ENCODE measurements at regions of chr17 and their contacts with region 1.

Region 1: GRCh38 chr17:28937044-28937729 is 14.1 kb downstream of the PHF12 start:
- DNase-seq: no peak

Region 2: GRCh38 chr17:28889996-28890395 is 47.2 kb before region 1 on chr17:
- intact Hi-C with region 1: loop called in 1 of 2 experiments (anchors 10 kb)
- DNase-seq: no peak

Region 3: GRCh38 chr17:29293890-29294579 is 356.8 kb after region 1 on chr17 and contains the start of gene NUFIP2:
- intact Hi-C with region 1: no loop called
- DNase-seq: peak; percentile 100
- total RNA-seq, gene NUFIP2: 39.6 to 46.9 TPM

Measured in posterior vena cava (tissue), 2 donors.